ENCODE measurements at regions of chr3 and their contacts with region 1.

Region 1: GRCh38 chr3:33440323-33441232 is at the start of gene UBP1:
- H3K4me3 ChIP-seq: peak within 1 kb of the TSS; percentile 90
- H3K27ac ChIP-seq: peak within 1 kb of the TSS; percentile 92
- H3K4me1 ChIP-seq: peaks cover 6% of the 10 kb centered on the region
- CTCF ChIP-seq: no peak

Region 2: GRCh38 chr3:33456756-33457155 is 16.2 kb after region 1 on chr3:
- CTCF ChIA-PET with region 1: interaction called, 3 read pairs
- POLR2A ChIA-PET with region 1: interaction called, 10 read pairs
- H3K4me3 ChIP-seq: no peak overlapping the region
- H3K27ac ChIP-seq: no peak overlapping the region
- H3K4me1 ChIP-seq: no peaks in the 10 kb centered on the region
- CTCF ChIP-seq: no peak

Region 3: GRCh38 chr3:33798411-33799201 is 358.0 kb after region 1 on chr3 and contains the start of gene PDCD6IP:
- CTCF ChIA-PET with region 1: no interaction called
- POLR2A ChIA-PET with region 1: interaction called, 11 read pairs
- H3K4me3 ChIP-seq: peak within 1 kb of the TSS; percentile 100
- H3K27ac ChIP-seq: peak within 1 kb of the TSS; percentile 68
- H3K4me1 ChIP-seq: no peaks in the 10 kb centered on the region
- CTCF ChIP-seq: peak; percentile 89

Measured in HEK293 (cell line).